Heart left ventricle (tissue), 16 donors: ENCODE measurements at regions of chr22 and their contacts with region 1.

Region 1: GRCh38 chr22:36331306-36331911 is 56.4 kb downstream of the MYH9 start:
- DNase-seq: peak; percentile 87 to 94 (median 87)
- ATAC-seq: peak; percentile 32 to 61 (median 52)
- H3K4me3 ChIP-seq: peak overlapping the region in 6 of 12 donors; percentile 5 to 44 (median 15)
- H3K27ac ChIP-seq: peak overlapping the region; percentile 89 to 100 (median 94)
- H3K4me1 ChIP-seq: peaks cover 70 to 100% (median 100%) of the 10 kb centered on the region in 12 donors
- H3K27me3 ChIP-seq: no peaks in the 10 kb centered on the region
- CTCF ChIP-seq: no peak
- POLR2A ChIP-seq: peak in 1 of 2 donors; percentile 38

Region 2: DNA sequence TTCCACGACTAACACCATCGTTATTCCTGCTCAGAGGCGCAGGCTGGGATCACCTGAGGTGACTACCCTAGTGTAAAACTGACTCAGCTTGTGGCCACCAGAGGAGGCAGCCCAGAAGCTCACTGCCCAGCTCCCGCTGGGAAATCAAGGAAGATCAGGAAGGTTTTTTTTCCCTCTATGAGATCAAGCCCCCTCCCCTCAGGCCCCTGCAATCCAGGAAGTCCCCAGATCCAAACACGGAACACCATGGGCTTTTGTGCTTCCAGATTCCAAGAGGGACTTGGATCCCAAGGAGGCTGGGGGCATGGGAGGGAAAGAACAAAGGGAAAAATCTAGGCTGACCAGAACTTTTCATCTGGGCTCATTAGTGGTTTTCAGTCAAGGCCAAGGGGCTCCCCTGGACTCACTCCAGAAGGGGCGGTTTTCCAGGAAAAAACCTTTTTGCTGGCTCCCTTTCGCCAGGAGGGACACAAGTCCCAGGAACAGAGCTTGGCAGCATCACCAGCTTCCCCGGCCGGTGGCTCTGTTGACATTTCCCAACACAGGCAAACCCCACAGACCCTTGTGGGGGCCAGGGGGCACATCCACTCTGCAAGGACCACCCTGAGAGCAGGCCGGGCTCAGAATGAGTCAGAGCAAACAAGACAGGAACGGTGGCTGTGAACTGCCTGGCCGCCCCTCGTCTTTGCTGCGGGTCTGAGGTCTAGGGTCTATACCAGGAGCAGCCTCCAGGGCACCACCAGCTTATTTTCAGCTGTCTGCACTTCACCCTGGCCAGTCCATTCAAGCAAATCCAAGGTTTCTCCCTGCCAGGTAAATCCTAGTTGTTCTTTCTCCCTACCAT is 19.6 kb after region 1 on chr22:
- intact Hi-C with region 1: loop called in 1 of 10 experiments (anchors 2 kb)
- DNase-seq: no peak
- ATAC-seq: peak in 1 of 4 donors; percentile 21
- H3K4me3 ChIP-seq: peak overlapping the region in 2 of 12 donors; percentile 3 to 33
- H3K27ac ChIP-seq: peak overlapping the region; percentile 57 to 99 (median 88)
- H3K4me1 ChIP-seq: peaks cover 40 to 98% (median 95%) of the 10 kb centered on the region in 12 donors
- H3K27me3 ChIP-seq: no peaks in the 10 kb centered on the region
- CTCF ChIP-seq: no peak
- POLR2A ChIP-seq: no peak

Region 3: DNA sequence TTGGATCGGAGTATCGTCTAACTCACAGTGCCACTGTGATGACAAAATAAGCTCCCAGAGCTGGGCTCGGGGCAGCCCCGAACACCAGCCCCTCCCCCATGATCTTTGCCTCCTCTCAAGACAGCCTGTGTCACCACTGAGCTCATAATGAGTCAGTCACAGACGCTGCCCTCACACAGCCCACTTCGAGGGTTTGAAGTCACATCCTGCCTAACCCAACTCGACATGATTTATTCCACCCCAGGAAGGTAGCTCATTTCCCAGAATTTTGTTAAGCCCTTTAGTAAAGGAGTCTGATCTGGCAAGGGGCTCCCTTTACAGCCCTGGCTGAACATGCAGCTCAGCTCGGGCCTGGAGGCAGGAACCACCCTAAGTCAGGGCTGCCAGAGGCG is 33.6 kb after region 1 on chr22:
- intact Hi-C with region 1: loop called in 9 of 10 experiments (anchors 5 kb)
- DNase-seq: peak in 2 of 5 donors; percentile 71 to 88
- ATAC-seq: peak in 3 of 4 donors; percentile 68 to 69 (median 69)
- H3K4me3 ChIP-seq: no peak overlapping the region
- H3K27ac ChIP-seq: peak overlapping the region; percentile 43 to 99 (median 88)
- H3K4me1 ChIP-seq: peaks cover 39 to 100% (median 99%) of the 10 kb centered on the region in 12 donors
- H3K27me3 ChIP-seq: no peaks in the 10 kb centered on the region
- CTCF ChIP-seq: no peak
- POLR2A ChIP-seq: no peak

Region 4: GRCh38 chr22:36369922-36370791 is 38.7 kb after region 1 on chr22:
- intact Hi-C with region 1: loop called in 9 of 10 experiments (anchors 5 kb)
- DNase-seq: peak in 3 of 5 donors; percentile 62 to 67 (median 64)
- ATAC-seq: peak; percentile 59 to 76 (median 63)
- H3K4me3 ChIP-seq: peak overlapping the region in 9 of 12 donors; percentile 7 to 39 (median 27)
- H3K27ac ChIP-seq: peak overlapping the region; percentile 50 to 99 (median 88)
- H3K4me1 ChIP-seq: peaks cover 49 to 100% (median 100%) of the 10 kb centered on the region in 12 donors
- H3K27me3 ChIP-seq: no peaks in the 10 kb centered on the region
- CTCF ChIP-seq: no peak
- POLR2A ChIP-seq: no peak

Region 5: DNA sequence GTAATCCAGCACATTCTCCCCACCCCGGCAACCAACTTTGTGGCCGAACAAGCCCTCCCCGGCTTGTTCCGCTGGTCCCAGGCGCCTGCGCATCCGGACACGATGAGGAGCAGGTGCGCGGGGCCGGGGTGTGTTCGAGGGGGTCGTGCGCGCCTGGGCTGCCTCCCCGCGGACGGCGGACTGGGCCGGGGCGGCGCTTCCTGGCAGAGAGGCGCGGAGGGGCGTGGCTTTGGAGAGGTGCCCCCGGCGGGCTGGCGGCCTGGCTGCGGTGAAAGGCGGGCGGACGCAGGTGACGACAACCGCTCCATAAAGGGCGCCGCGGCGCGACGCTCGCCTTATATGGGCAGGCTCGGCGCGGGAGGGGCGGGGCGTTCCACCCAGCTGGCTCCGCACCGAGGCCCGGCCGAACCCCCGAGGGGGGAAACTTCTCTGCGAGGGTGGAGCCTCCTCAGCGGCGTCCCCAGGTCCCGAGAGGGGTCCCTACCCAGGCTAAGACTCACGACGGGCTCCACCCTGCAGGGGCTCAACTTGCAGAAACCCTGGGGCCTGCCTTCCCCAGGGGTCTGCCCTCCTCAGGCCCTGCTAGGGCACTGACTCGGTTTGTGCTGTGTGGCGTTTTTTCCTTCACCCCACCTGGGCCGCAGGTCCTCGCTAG is 123.6 kb after region 1 on chr22:
- intact Hi-C with region 1: loop called in 3 of 10 experiments (anchors 1 to 5 kb)
- DNase-seq: peak; percentile 94 to 97 (median 95)
- ATAC-seq: peak; percentile 83 to 91 (median 87)
- H3K4me3 ChIP-seq: peak overlapping the region; percentile 15 to 67 (median 50)
- H3K27ac ChIP-seq: peak overlapping the region; percentile 81 to 99 (median 93)
- H3K4me1 ChIP-seq: peaks cover 15 to 76% (median 53%) of the 10 kb centered on the region in 12 donors
- H3K27me3 ChIP-seq: no peaks in the 10 kb centered on the region
- CTCF ChIP-seq: peak in 2 of 12 donors; percentile 32 to 45
- POLR2A ChIP-seq: peak; percentile 60 to 84

Region 6: GRCh38 chr22:36461669-36462649 is 130.6 kb after region 1 on chr22:
- intact Hi-C with region 1: loop called in 3 of 10 experiments (anchors 2 to 5 kb)
- DNase-seq: peak; percentile 61 to 75 (median 66)
- ATAC-seq: peak; percentile 4 to 33 (median 24)
- H3K4me3 ChIP-seq: no peak overlapping the region
- H3K27ac ChIP-seq: peak overlapping the region; percentile 73 to 98 (median 94)
- H3K4me1 ChIP-seq: peaks cover 12 to 78% (median 69%) of the 10 kb centered on the region in 12 donors
- H3K27me3 ChIP-seq: no peaks in the 10 kb centered on the region
- CTCF ChIP-seq: no peak
- POLR2A ChIP-seq: no peak

Region 7: GRCh38 chr22:36595940-36596339 is 264.5 kb after region 1 on chr22:
- intact Hi-C with region 1: no loop called
- DNase-seq: no peak
- ATAC-seq: no peak
- H3K4me3 ChIP-seq: no peak overlapping the region
- H3K27ac ChIP-seq: no peak overlapping the region
- H3K4me1 ChIP-seq: no peaks in the 10 kb centered on the region
- H3K27me3 ChIP-seq: peaks cover 0 to 51% (median 9%) of the 10 kb centered on the region in 9 donors
- CTCF ChIP-seq: no peak
- POLR2A ChIP-seq: no peak